B cell (primary cell): ENCODE measurements at regions of chr19 and their contacts with region 1.

Region 1: DNA sequence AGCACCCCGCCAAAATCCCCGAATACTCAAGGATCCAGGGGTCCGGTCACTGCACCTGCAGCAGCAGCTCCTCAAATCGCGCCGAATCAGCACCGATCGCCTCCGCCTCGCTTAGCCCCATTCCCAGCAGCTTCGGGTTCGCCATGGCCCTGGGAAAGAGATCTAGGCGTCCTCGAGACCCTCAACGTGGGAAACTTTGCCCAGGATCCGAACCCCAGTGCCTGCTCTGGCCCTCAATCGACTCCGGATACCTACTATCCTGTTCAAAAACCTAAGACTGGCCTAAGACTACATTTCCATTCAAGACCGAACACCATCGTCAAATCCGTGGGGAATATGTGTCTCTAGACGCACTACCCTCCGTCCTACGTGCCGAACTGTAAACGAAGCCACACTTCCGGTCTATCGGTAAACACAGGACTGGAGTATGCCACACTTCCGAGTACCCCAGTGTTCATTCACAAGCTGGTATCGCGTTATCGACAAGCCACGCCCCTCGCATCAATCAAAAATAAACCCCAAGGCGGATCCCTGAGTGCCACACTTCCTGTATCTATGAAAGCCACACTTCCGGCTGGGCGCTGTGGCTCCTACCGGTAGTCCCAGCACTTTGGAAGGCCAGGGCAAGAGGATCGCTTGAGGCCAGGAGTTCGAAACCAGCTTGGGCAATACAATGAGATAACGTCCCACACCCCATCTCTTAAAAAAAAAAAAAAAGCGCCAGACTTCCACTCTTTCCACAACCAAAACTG is at the start of gene PIH1D1:
- DNase-seq: peak; percentile 98
- ATAC-seq: peak; percentile 57
- H3K4me3 ChIP-seq: peak within 1 kb of the TSS; percentile 87 to 100 (median 99)
- H3K4me3 Mint-ChIP-seq: peak within 1 kb of the TSS; percentile 99
- H3K27ac ChIP-seq: peak within 1 kb of the TSS; percentile 99
- H3K27ac Mint-ChIP-seq: peak within 1 kb of the TSS; percentile 100
- H3K4me1 ChIP-seq: peaks cover 23 to 36% of the 10 kb centered on the region in 2 donors
- H3K4me1 Mint-ChIP-seq: peaks cover 46% of the 10 kb centered on the region
- H3K27me3 ChIP-seq: no peaks in the 10 kb centered on the region
- H3K27me3 Mint-ChIP-seq: no peaks in the 10 kb centered on the region
- CTCF ChIP-seq: no peak
- total RNA-seq, gene PIH1D1: 168 and 184 TPM in 2 replicates

Region 2: GRCh38 chr19:49331616-49332055 is 120.0 kb before region 1 on chr19:
- CTCF ChIA-PET with region 1: no interaction called
- POLR2A ChIA-PET with region 1: interaction called, 11 read pairs
- intact Hi-C with region 1: no loop called
- DNase-seq: peak; percentile 83
- ATAC-seq: peak; percentile 29
- H3K4me3 ChIP-seq: peak overlapping the region in 1 of 5 experiments; percentile 35
- H3K4me3 Mint-ChIP-seq: peak overlapping the region; percentile 65
- H3K27ac ChIP-seq: peak overlapping the region; percentile 93 to 98
- H3K27ac Mint-ChIP-seq: peak overlapping the region; percentile 99
- H3K4me1 ChIP-seq: peaks cover 79 to 89% of the 10 kb centered on the region in 2 donors
- H3K4me1 Mint-ChIP-seq: peaks cover 82% of the 10 kb centered on the region
- H3K27me3 ChIP-seq: no peaks in the 10 kb centered on the region
- H3K27me3 Mint-ChIP-seq: no peaks in the 10 kb centered on the region
- CTCF ChIP-seq: no peak

Region 3: GRCh38 chr19:49473868-49474544 is 22.4 kb after region 1 on chr19 and contains the start of gene FLT3LG:
- CTCF ChIA-PET with region 1: interaction called, 44 read pairs
- POLR2A ChIA-PET with region 1: interaction called, 57 read pairs
- intact Hi-C with region 1: loop called (anchors 1 kb)
- DNase-seq: peak; percentile 94
- ATAC-seq: peak; percentile 52
- H3K4me3 ChIP-seq: peak within 1 kb of the TSS in 4 of 5 experiments; percentile 53 to 98 (median 70)
- H3K4me3 Mint-ChIP-seq: peak within 1 kb of the TSS; percentile 93
- H3K27ac ChIP-seq: peak within 1 kb of the TSS; percentile 75 to 81
- H3K27ac Mint-ChIP-seq: peak within 1 kb of the TSS; percentile 97
- H3K4me1 ChIP-seq: peaks cover 43 to 73% of the 10 kb centered on the region in 2 donors
- H3K4me1 Mint-ChIP-seq: peaks cover 57% of the 10 kb centered on the region
- H3K27me3 ChIP-seq: no peaks in the 10 kb centered on the region
- H3K27me3 Mint-ChIP-seq: no peaks in the 10 kb centered on the region
- CTCF ChIP-seq: peak; percentile 89
- total RNA-seq, gene FLT3LG: 27.8 and 31.0 TPM in 2 replicates

Region 4: GRCh38 chr19:49497047-49497788 is 45.6 kb after region 1 on chr19:
- CTCF ChIA-PET with region 1: interaction called, 3 read pairs
- POLR2A ChIA-PET with region 1: interaction called, 13 read pairs
- intact Hi-C with region 1: loop called (anchors 1 kb)
- DNase-seq: peak; percentile 92
- ATAC-seq: peak; percentile 9
- H3K4me3 ChIP-seq: peak overlapping the region; percentile 74 to 99 (median 98)
- H3K4me3 Mint-ChIP-seq: peak overlapping the region; percentile 98
- H3K27ac ChIP-seq: peak overlapping the region; percentile 97 to 99
- H3K27ac Mint-ChIP-seq: peak overlapping the region; percentile 99
- H3K4me1 ChIP-seq: peaks cover 32 to 61% of the 10 kb centered on the region in 2 donors
- H3K4me1 Mint-ChIP-seq: peaks cover 71% of the 10 kb centered on the region
- H3K27me3 ChIP-seq: no peaks in the 10 kb centered on the region
- H3K27me3 Mint-ChIP-seq: no peaks in the 10 kb centered on the region
- CTCF ChIP-seq: no peak